Activated CD4-positive, alpha-beta memory T cell treated with anti-CD3 and anti-CD28 coated beads for 36 hours (primary cell): ENCODE measurements at regions of chr15 and their contacts with region 1.

Region 1: DNA sequence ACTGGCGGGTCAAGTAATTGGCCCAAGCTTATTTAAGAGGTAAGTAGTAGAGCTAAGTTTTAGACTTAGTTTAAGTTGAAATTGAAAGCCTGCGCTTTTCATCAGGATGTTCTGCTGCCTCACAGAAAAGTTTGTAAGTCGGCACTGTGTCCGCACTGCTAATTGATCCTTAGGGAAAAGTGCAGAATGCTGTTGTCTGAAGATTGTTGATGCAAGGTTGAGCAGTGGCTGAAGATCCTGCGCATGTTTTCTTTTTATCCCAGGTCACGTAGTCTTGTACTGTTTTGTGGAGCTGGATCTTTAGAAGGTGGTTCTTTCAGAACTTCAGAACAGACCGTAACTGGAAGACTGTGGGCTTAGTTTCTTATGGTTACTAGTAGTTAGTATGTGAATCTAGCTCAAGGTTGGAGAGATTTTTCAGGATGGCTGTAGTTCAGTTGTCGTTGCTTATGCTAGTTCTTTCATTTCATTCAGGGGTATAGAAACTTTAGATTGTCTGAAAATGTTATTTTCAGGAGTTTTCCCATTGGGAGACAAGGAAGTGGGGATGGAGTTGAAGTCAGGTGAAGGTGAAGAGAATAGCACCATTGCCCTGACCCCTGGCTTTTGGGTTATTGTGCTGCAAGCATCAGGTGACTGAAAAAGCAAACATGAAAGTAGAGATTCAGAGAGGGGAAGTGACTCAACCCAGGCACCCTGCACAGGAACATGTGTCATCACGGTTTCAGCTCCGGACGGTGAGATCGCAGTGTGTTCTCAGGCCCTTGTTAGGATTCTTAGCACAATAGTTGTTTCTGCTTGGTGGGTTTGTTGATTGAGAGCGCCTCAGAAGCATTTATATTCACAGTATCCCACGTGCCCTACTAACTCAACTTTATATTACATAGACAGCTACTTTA is 32.8 kb downstream of the AKAP13 start:
- DNase-seq: peak; percentile 88
- H3K4me3 Mint-ChIP-seq: peak overlapping the region; percentile 50
- H3K27ac Mint-ChIP-seq: peak overlapping the region; percentile 76
- H3K4me1 Mint-ChIP-seq: peaks cover 78% of the 10 kb centered on the region
- H3K27me3 Mint-ChIP-seq: no peaks in the 10 kb centered on the region

Region 2: GRCh38 chr15:85318048-85318731 is 95.0 kb before region 1 on chr15:
- CTCF ChIA-PET with region 1: interaction called, 24 read pairs
- POLR2A ChIA-PET with region 1: no interaction called
- intact Hi-C with region 1: loop called (anchors 1 kb)
- DNase-seq: peak; percentile 50
- H3K4me3 Mint-ChIP-seq: no peak overlapping the region
- H3K27ac Mint-ChIP-seq: peak overlapping the region; percentile 28
- H3K4me1 Mint-ChIP-seq: peaks cover 49% of the 10 kb centered on the region
- H3K27me3 Mint-ChIP-seq: no peaks in the 10 kb centered on the region

Region 3: DNA sequence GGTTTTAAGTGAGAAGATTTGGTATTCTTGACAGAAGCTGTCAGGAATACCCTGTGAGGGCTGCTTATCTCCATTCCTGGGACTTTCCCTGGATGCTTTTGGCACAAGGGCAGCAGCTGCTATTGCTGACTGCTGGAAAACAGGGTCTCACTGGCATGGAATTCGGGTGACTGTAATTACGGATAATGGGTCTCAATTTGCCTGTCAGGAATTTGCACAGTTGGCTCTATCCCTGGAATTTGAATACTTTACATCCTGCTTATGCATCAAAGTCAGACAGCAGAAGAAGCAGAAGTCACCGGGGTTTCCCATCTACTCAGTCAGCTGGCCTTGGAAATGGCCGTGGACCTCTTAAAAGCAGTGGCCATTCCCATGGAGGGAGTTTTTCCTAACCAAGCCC is 58.7 kb before region 1 on chr15:
- CTCF ChIA-PET with region 1: interaction called, 5 read pairs
- POLR2A ChIA-PET with region 1: no interaction called
- intact Hi-C with region 1: loop called (anchors 1 kb)
- DNase-seq: no peak
- H3K4me3 Mint-ChIP-seq: no peak overlapping the region
- H3K27ac Mint-ChIP-seq: no peak overlapping the region
- H3K4me1 Mint-ChIP-seq: peaks cover 15% of the 10 kb centered on the region
- H3K27me3 Mint-ChIP-seq: no peaks in the 10 kb centered on the region

Region 4: GRCh38 chr15:85402195-85402881 is 10.9 kb before region 1 on chr15:
- CTCF ChIA-PET with region 1: interaction called, 50 read pairs
- POLR2A ChIA-PET with region 1: interaction called, 4 read pairs
- intact Hi-C with region 1: no loop called
- DNase-seq: no peak
- H3K4me3 Mint-ChIP-seq: peak overlapping the region; percentile 1
- H3K27ac Mint-ChIP-seq: peak overlapping the region; percentile 10
- H3K4me1 Mint-ChIP-seq: peaks cover 73% of the 10 kb centered on the region
- H3K27me3 Mint-ChIP-seq: no peaks in the 10 kb centered on the region

Region 5: DNA sequence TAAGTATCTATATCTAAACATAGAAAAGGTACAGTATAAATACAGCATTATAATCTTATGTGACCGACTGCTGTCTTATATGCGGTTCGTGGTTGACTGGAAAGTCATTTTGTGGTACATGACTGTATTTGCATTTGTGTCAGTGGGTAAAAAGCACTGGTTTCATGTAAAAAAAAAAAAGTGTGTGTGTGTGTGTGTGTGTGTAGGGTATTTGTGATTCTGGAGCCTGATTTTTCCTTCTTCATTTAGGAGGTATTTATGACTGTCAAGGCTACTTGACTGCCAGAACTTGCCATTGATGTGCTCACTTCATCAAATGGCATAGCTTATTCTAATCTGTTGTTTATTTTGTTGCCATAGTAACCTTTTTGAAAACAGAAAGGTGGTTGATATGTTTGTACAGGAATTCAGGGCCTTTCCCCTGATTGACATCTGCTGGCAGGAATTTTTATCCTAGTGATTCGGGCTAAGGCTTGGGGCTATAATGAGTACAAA is 30.4 kb after region 1 on chr15:
- CTCF ChIA-PET with region 1: interaction called, 5 read pairs
- POLR2A ChIA-PET with region 1: interaction called, 5 read pairs
- intact Hi-C with region 1: loop called (anchors 2 kb)
- DNase-seq: no peak
- H3K4me3 Mint-ChIP-seq: no peak overlapping the region
- H3K27ac Mint-ChIP-seq: peak overlapping the region; percentile 24
- H3K4me1 Mint-ChIP-seq: peaks cover 51% of the 10 kb centered on the region
- H3K27me3 Mint-ChIP-seq: no peaks in the 10 kb centered on the region

Region 6: DNA sequence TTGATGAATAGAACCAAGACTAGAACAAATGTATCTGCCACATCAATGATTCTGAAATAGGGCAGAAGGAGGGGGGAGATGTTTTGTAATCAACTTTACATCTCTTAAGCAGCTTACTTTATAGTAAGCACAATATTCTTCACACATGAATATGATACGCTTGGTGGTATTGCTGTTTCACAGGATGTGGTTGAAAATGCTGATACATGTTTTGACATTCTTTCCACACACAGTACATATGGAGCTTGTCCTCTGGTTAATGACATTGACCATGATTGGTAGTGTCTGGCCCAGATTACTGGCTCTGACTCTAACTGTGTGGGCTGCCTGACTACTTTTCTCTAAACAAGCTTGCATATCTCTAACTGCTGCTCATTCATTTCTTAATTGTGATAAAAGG is 212.7 kb after region 1 on chr15:
- CTCF ChIA-PET with region 1: no interaction called
- POLR2A ChIA-PET with region 1: no interaction called
- intact Hi-C with region 1: loop called (anchors 2 kb)
- DNase-seq: peak; percentile 65
- H3K4me3 Mint-ChIP-seq: peak overlapping the region; percentile 33
- H3K27ac Mint-ChIP-seq: peak overlapping the region; percentile 87
- H3K4me1 Mint-ChIP-seq: peaks cover 18% of the 10 kb centered on the region
- H3K27me3 Mint-ChIP-seq: no peaks in the 10 kb centered on the region